ENCODE measurements at regions of chr6 and their contacts with region 1.

Region 1: DNA sequence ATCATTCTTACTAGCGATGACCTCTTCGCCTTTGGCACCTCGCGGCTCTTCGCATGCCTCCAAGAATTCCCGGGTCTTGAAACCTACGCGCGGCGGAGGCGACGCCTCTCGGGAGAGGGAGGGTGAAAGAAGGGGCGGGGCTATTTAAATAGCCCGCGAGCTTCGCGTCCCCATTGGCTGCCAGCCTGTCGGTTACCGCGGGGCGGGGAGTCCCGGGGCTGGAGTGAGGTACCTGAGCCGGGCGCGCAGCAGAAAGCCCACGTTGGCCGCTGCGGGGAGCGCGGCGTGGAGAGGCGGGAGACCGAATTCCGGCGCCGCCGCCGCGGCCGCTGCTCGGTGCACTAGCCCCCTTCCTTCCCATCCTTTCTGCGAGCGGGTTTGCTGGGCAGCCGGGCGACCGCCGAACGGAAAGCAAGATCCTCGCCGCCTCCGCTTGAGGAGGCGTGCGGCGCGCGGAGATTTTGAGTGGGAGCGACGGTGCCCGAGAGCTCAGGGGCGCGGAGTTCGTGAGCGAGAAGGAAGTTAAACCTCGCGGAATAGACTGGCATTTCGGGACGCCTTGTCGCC is at the start of gene BMP6:
- DNase-seq: peak; percentile 67
- ATAC-seq: peak; percentile 87
- H3K4me3 ChIP-seq: peak within 1 kb of the TSS; percentile 27 to 67 (median 31); a peak in 5 of 6 replicates
- H3K27ac ChIP-seq: no peak within 1 kb of the TSS
- H3K4me1 ChIP-seq: peaks cover 38% of the 10 kb centered on the region
- H3K27me3 ChIP-seq: peaks cover 21 to 74% of the 10 kb centered on the region in 2 experiments; a peak in 4 of 5 replicates
- CTCF ChIP-seq: 0 out of 2 replicates have a peak, but pooled peaks have one; percentile 10
- EP300 ChIP-seq: no peak
- POLR2A ChIP-seq: no peak
- RAD21 ChIP-seq: no peak
- total RNA-seq, gene BMP6: 0.09 TPM in 1 of 2 replicates, not detected in the other

Region 2: DNA sequence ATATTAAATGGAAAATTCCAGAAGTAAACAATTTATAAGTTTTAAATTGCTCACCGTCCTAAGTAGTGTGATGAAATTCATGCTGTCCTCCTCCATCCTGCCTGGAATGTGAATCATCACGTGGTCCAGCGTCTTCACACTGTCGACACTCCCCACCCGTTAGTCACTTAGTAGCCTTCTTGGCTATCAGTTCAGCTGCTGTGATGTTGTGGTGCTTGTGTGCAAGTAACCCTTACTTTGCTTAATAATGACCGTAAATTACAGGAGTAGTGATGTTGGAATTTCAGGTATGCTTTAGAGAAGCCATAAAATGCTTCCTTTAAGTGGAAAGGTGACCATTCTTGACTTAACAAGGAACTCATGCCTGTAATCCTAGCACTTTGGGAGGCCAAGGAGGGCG is 311.1 kb before region 1 on chr6:
- CTCF ChIA-PET with region 1: no interaction called
- POLR2A ChIA-PET with region 1: no interaction called
- in situ Hi-C with region 1: no loop called
- intact Hi-C with region 1: no loop called
- DNase-seq: no peak
- ATAC-seq: no peak
- H3K4me3 ChIP-seq: no peak overlapping the region
- H3K27ac ChIP-seq: no peak overlapping the region
- H3K4me1 ChIP-seq: peaks cover 16% of the 10 kb centered on the region
- H3K27me3 ChIP-seq: no peaks in the 10 kb centered on the region
- CTCF ChIP-seq: no peak
- EP300 ChIP-seq: no peak
- POLR2A ChIP-seq: no peak
- RAD21 ChIP-seq: no peak

Region 3: DNA sequence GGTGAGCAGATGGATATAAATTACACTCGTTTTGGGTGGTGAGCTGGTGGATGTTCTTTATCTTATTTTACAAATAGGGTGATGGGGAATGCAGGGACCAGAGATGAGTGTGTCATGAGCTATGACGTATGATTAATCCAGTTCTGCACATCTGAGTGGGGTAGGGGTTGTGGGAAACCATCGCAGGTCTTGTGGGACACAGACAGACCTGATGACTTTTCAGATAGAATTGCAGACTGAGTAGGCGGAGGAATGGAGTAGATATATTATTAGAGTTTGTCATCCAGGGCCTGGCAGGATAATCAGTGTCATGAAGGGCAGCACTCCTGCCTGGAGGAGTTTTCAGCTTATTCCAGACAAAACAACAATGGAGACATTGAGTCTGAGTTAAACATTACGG is 197.4 kb before region 1 on chr6:
- CTCF ChIA-PET with region 1: no interaction called
- POLR2A ChIA-PET with region 1: no interaction called
- in situ Hi-C with region 1: no loop called
- intact Hi-C with region 1: no loop called
- DNase-seq: no peak
- ATAC-seq: no peak
- H3K4me3 ChIP-seq: no peak overlapping the region
- H3K27ac ChIP-seq: no peak overlapping the region
- H3K4me1 ChIP-seq: no peaks in the 10 kb centered on the region
- H3K27me3 ChIP-seq: peaks cover 0 to 31% of the 10 kb centered on the region in 2 experiments; a peak in 4 of 5 replicates
- CTCF ChIP-seq: no peak
- EP300 ChIP-seq: no peak
- POLR2A ChIP-seq: no peak
- RAD21 ChIP-seq: no peak

Region 4: DNA sequence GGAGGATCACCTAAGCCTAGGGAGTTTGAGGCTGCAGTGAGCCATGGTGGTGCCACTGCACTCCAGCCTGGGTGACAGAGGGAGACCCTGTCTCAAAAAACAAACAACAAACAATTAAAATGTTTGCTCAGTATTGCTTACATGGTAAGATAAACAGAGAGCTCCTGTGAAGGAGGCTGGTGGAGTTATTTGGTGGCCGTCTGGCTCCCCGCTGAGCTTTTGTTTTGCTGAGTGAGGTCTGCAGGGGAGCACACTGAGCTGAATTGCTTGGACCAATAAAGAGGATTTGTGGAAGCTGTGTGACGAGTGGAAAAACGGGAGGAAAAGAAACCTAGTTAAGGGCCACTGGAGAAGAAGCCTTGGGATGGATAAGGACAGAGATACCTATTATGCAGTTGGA is 41.1 kb before region 1 on chr6:
- CTCF ChIA-PET with region 1: no interaction called
- POLR2A ChIA-PET with region 1: no interaction called
- in situ Hi-C with region 1: no loop called
- intact Hi-C with region 1: no loop called
- DNase-seq: no peak
- ATAC-seq: no peak
- H3K4me3 ChIP-seq: no peak overlapping the region
- H3K27ac ChIP-seq: no peak overlapping the region
- H3K4me1 ChIP-seq: no peaks in the 10 kb centered on the region
- H3K27me3 ChIP-seq: peaks cover 1 to 17% of the 10 kb centered on the region in 2 experiments; a peak in 3 of 5 replicates
- CTCF ChIP-seq: no peak
- EP300 ChIP-seq: no peak
- POLR2A ChIP-seq: no peak
- RAD21 ChIP-seq: no peak

Region 5: GRCh38 chr6:7813704-7814103 is 87.8 kb after region 1 on chr6:
- CTCF ChIA-PET with region 1: interaction called, 5 read pairs
- POLR2A ChIA-PET with region 1: no interaction called
- in situ Hi-C with region 1: no loop called
- intact Hi-C with region 1: loop called (anchors 1 kb)
- DNase-seq: peak; percentile 53
- ATAC-seq: peak; percentile 99
- H3K4me3 ChIP-seq: no peak overlapping the region
- H3K27ac ChIP-seq: no peak overlapping the region
- H3K4me1 ChIP-seq: no peaks in the 10 kb centered on the region
- H3K27me3 ChIP-seq: peaks cover 2 to 27% of the 10 kb centered on the region in 2 experiments; a peak in 4 of 5 replicates
- CTCF ChIP-seq: peak; percentile 59
- EP300 ChIP-seq: no peak
- POLR2A ChIP-seq: no peak
- RAD21 ChIP-seq: no peak

Region 6: DNA sequence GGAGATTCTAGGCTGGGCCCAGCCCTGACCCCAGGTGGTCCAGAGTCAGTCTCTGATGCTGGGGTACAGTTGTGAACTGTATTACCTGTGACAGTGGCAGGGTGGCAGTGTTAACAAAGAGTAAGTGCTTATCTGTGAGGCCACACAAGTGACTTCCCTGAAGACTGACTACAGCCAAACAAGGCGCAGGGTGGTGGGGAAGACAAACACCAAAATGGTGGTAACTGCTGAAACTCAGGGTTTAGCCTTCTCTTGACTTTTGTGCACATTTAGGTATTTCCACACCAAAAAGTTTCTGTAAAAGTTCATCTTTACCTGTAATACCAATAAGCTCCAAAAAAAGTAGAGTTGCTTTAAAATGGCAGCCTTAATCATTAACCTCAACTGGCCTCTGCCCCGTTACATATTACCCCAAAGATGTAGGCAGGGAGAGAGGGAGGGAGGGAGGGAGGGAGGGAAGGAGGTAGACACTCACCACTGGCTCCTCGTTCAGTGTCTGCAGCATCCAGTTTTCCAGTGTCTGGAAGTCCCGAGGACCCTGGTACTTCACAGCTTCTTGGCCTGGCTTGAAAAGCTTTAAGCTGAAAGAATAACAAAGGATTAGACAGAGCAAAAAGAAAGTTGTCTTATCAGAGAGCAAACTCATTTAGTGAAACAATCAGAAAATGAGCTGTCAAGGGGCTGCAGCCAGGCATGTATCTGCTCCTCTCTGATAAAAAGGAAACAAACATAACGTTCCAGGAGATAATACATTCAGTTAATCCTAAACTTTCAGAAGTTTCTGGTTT is 173.4 kb after region 1 on chr6:
- CTCF ChIA-PET with region 1: no interaction called
- POLR2A ChIA-PET with region 1: no interaction called
- in situ Hi-C with region 1: no loop called
- intact Hi-C with region 1: loop called (anchors 5 kb)
- DNase-seq: peak; percentile 50
- ATAC-seq: peak; percentile 72
- H3K4me3 ChIP-seq: no peak overlapping the region
- H3K27ac ChIP-seq: no peak overlapping the region
- H3K4me1 ChIP-seq: peaks cover 25% of the 10 kb centered on the region
- H3K27me3 ChIP-seq: no peaks in the 10 kb centered on the region
- CTCF ChIP-seq: peak; percentile 67
- EP300 ChIP-seq: no peak
- POLR2A ChIP-seq: no peak
- RAD21 ChIP-seq: peak; percentile 67

Region 7: DNA sequence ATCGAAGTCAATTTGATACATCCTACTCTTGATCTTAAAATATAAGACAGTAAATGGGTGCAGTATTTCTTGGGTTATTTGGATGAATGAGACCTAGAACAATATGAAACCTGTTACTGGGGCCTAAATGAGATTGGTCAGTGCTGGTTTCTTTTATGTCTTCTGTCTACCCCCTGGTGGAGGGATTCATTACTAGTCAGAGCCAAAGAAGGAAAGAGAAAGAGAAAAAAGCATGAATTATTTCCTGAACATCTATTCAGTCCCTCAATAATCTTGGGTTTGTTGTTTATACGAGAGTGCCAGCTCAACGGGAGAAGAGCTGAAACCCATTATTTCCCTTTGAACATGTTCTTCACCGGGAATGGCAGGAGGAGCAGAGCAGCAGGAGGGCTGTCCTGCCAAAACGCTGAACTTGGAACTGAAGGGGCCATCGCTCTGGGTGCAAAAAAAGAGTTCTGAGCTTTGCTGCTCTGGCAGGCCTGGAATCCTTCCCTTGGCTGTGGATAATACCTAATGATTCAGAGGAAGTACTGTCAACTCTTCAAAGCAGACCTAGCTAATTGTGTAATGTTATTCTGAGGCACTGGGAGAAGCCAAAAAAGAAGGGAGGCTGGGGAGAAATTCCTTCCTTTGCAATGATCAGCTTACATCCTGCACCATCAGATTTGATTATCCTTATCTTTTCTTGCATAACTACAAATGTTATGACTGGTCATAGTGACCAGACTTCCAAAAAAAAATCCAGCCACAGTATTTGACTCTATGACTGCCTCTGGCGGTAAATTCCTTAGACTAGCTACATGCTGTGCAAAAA is 266.3 kb after region 1 on chr6:
- CTCF ChIA-PET with region 1: interaction called, 11 read pairs
- POLR2A ChIA-PET with region 1: no interaction called
- in situ Hi-C with region 1: no loop called
- intact Hi-C with region 1: loop called (anchors 1 kb)
- DNase-seq: peak; percentile 69
- ATAC-seq: peak; percentile 88
- H3K4me3 ChIP-seq: no peak overlapping the region
- H3K27ac ChIP-seq: no peak overlapping the region
- H3K4me1 ChIP-seq: peaks cover 16% of the 10 kb centered on the region; the same call in 1 of the 2 replicates
- H3K27me3 ChIP-seq: no peaks in the 10 kb centered on the region
- CTCF ChIP-seq: peak; percentile 74
- EP300 ChIP-seq: no peak
- POLR2A ChIP-seq: no peak
- RAD21 ChIP-seq: peak; percentile 88

Region 8: GRCh38 chr6:8006208-8006607 is 280.3 kb after region 1 on chr6:
- CTCF ChIA-PET with region 1: interaction called, 16 read pairs
- POLR2A ChIA-PET with region 1: no interaction called
- in situ Hi-C with region 1: loop called (anchors 5 kb)
- intact Hi-C with region 1: loop called (anchors 1 kb)
- DNase-seq: peak; percentile 48
- ATAC-seq: peak; percentile 47; the same call in 1 of the 3 replicates
- H3K4me3 ChIP-seq: no peak overlapping the region
- H3K27ac ChIP-seq: no peak overlapping the region
- H3K4me1 ChIP-seq: peaks cover 6% of the 10 kb centered on the region
- H3K27me3 ChIP-seq: no peaks in the 10 kb centered on the region
- CTCF ChIP-seq: peak; percentile 66
- EP300 ChIP-seq: no peak
- POLR2A ChIP-seq: no peak
- RAD21 ChIP-seq: peak; percentile 56

Region 9: GRCh38 chr6:8219352-8219943 is 493.5 kb after region 1 on chr6:
- CTCF ChIA-PET with region 1: no interaction called
- POLR2A ChIA-PET with region 1: no interaction called
- in situ Hi-C with region 1: no loop called
- intact Hi-C with region 1: loop called (anchors 10 kb)
- DNase-seq: peak; percentile 53
- ATAC-seq: peak; percentile 69
- H3K4me3 ChIP-seq: no peak overlapping the region
- H3K27ac ChIP-seq: no peak overlapping the region
- H3K4me1 ChIP-seq: no peaks in the 10 kb centered on the region
- H3K27me3 ChIP-seq: no peaks in the 10 kb centered on the region
- CTCF ChIP-seq: peak; percentile 69
- EP300 ChIP-seq: no peak
- POLR2A ChIP-seq: no peak
- RAD21 ChIP-seq: 0 out of 2 replicates have a peak, but pooled peaks have one; percentile 23